ENCODE measurements at regions of chr5 and their contacts with region 1.

Region 1: GRCh38 chr5:142611154-142611553 is 74.7 kb downstream of the FGF1 start:
- DNase-seq: peak; percentile 76
- H3K4me3 ChIP-seq: no peak overlapping the region
- H3K27ac ChIP-seq: no peak overlapping the region
- H3K4me1 ChIP-seq: peaks cover 2 to 14% of the 10 kb centered on the region in 2 experiments; a peak in 2 of 4 replicates
- H3K27me3 ChIP-seq: no peaks in the 10 kb centered on the region
- CTCF ChIP-seq: peak; percentile 85
- EP300 ChIP-seq: no peak
- RAD21 ChIP-seq: peak; percentile 98

Region 2: DNA sequence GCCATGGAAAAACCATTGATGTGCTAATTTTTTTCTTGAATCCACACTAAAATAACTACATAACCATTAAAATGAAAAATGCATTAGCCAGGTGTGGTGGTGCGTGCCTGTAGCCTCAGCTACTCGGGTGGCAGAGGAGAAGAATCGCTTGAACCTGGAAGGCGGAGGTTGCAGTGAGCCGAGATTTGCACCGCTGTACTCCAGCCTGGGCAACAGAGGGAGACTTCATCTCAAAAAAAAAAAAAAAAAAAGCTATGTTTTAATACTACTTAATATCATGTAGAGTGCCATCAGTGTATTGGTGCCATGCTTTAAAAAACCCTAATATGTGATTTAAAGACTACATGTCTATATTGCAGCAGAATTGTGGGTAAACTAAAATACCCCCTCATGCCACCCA is 443.7 kb before region 1 on chr5:
- CTCF ChIA-PET with region 1: no interaction called
- POLR2A ChIA-PET with region 1: no interaction called
- DNase-seq: no peak
- H3K4me3 ChIP-seq: no peak overlapping the region
- H3K27ac ChIP-seq: peak overlapping the region in 1 of 2 experiments; percentile 99; a peak in 2 of 4 replicates
- H3K4me1 ChIP-seq: peaks cover 5 to 48% of the 10 kb centered on the region in 2 experiments
- H3K27me3 ChIP-seq: no peaks in the 10 kb centered on the region
- CTCF ChIP-seq: peak; percentile 24; the same call in 1 of the 2 replicates
- EP300 ChIP-seq: no peak
- RAD21 ChIP-seq: peak; percentile 48

Region 3: GRCh38 chr5:142520886-142521285 is 90.3 kb before region 1 on chr5:
- CTCF ChIA-PET with region 1: no interaction called
- POLR2A ChIA-PET with region 1: no interaction called
- DNase-seq: no peak
- H3K4me3 ChIP-seq: no peak overlapping the region
- H3K27ac ChIP-seq: no peak overlapping the region
- H3K4me1 ChIP-seq: 0 out of 4 replicates have a peak, but pooled peaks cover 0 to 5% of the 10 kb centered on the region in 2 experiments
- H3K27me3 ChIP-seq: no peaks in the 10 kb centered on the region
- CTCF ChIP-seq: no peak
- EP300 ChIP-seq: no peak
- RAD21 ChIP-seq: no peak

Region 4: GRCh38 chr5:142587354-142587965 is 23.7 kb before region 1 on chr5:
- CTCF ChIA-PET with region 1: interaction called, 14 read pairs
- POLR2A ChIA-PET with region 1: no interaction called
- DNase-seq: no peak
- H3K4me3 ChIP-seq: no peak overlapping the region
- H3K27ac ChIP-seq: no peak overlapping the region
- H3K4me1 ChIP-seq: peaks cover 2 to 6% of the 10 kb centered on the region in 2 experiments; a peak in 2 of 4 replicates
- H3K27me3 ChIP-seq: no peaks in the 10 kb centered on the region
- CTCF ChIP-seq: peak; percentile 61
- EP300 ChIP-seq: no peak
- RAD21 ChIP-seq: peak; percentile 50

Region 5: GRCh38 chr5:142597546-142598341 is 13.4 kb before region 1 on chr5:
- CTCF ChIA-PET with region 1: interaction called, 55 read pairs
- POLR2A ChIA-PET with region 1: no interaction called
- DNase-seq: no peak
- H3K4me3 ChIP-seq: 0 out of 4 replicates have a peak overlapping the region, but pooled peaks of 1 of the 2 experiments have one; percentile 13
- H3K27ac ChIP-seq: peak overlapping the region in 1 of 2 experiments; percentile 82; a peak in 3 of 4 replicates
- H3K4me1 ChIP-seq: peaks cover 6 to 17% of the 10 kb centered on the region in 2 experiments; a peak in 2 of 4 replicates
- H3K27me3 ChIP-seq: no peaks in the 10 kb centered on the region
- CTCF ChIP-seq: peak; percentile 54
- EP300 ChIP-seq: no peak
- RAD21 ChIP-seq: no peak

Region 6: GRCh38 chr5:142627383-142628255 is 16.5 kb after region 1 on chr5:
- CTCF ChIA-PET with region 1: interaction called, 55 read pairs
- POLR2A ChIA-PET with region 1: no interaction called
- DNase-seq: no peak
- H3K4me3 ChIP-seq: no peak overlapping the region
- H3K27ac ChIP-seq: no peak overlapping the region
- H3K4me1 ChIP-seq: peaks cover 21 to 26% of the 10 kb centered on the region in 2 experiments
- H3K27me3 ChIP-seq: no peaks in the 10 kb centered on the region
- CTCF ChIP-seq: no peak
- EP300 ChIP-seq: no peak
- RAD21 ChIP-seq: no peak

Region 7: GRCh38 chr5:142636076-142636475 is 24.9 kb after region 1 on chr5:
- CTCF ChIA-PET with region 1: interaction called, 29 read pairs
- POLR2A ChIA-PET with region 1: no interaction called
- DNase-seq: peak; percentile 69
- H3K4me3 ChIP-seq: no peak overlapping the region
- H3K27ac ChIP-seq: peak overlapping the region in 1 of 2 experiments; percentile 80; a peak in 2 of 4 replicates
- H3K4me1 ChIP-seq: peaks cover 6 to 33% of the 10 kb centered on the region in 2 experiments; a peak in 3 of 4 replicates
- H3K27me3 ChIP-seq: no peaks in the 10 kb centered on the region
- CTCF ChIP-seq: no peak
- EP300 ChIP-seq: peak in 1 of 2 experiments; percentile 61; a peak in 1 of 4 replicates
- RAD21 ChIP-seq: no peak

Region 8: DNA sequence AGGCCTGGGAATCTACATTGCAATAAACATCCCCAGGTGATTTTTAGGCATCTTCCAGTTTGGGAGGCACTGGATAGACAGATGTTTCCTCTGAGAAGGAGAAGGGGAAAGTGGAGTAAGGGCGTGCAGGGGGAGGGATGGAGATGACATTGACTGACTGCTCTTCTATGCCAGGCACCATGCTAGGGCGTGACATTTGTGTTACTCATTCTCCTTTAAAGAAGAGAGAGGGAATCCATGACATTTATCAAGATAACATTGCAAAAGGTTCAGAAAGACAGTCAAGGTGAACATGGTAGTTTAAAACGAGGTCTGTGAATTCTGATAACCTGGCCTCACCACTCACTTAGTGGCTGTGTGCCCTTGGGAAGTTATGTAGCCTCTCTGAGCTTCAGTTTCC is 38.9 kb after region 1 on chr5:
- CTCF ChIA-PET with region 1: interaction called, 77 read pairs
- POLR2A ChIA-PET with region 1: no interaction called
- DNase-seq: no peak
- H3K4me3 ChIP-seq: no peak overlapping the region
- H3K27ac ChIP-seq: no peak overlapping the region
- H3K4me1 ChIP-seq: peaks cover 0 to 3% of the 10 kb centered on the region in 2 experiments; a peak in 1 of 4 replicates
- H3K27me3 ChIP-seq: no peaks in the 10 kb centered on the region
- CTCF ChIP-seq: no peak
- EP300 ChIP-seq: no peak
- RAD21 ChIP-seq: no peak

Region 9: GRCh38 chr5:142685418-142686209 is 74.5 kb after region 1 on chr5 and contains the start of gene FGF1:
- CTCF ChIA-PET with region 1: interaction called, 13 read pairs
- POLR2A ChIA-PET with region 1: no interaction called
- DNase-seq: peak; percentile 76
- H3K4me3 ChIP-seq: no peak within 1 kb of the TSS
- H3K27ac ChIP-seq: peak within 1 kb of the TSS in 1 of 2 experiments; percentile 95; a peak in 2 of 4 replicates
- H3K4me1 ChIP-seq: peaks cover 15 to 52% of the 10 kb centered on the region in 2 experiments; a peak in 3 of 4 replicates
- H3K27me3 ChIP-seq: no peaks in the 10 kb centered on the region
- CTCF ChIP-seq: no peak
- EP300 ChIP-seq: no peak
- RAD21 ChIP-seq: no peak
- polyA plus RNA-seq, gene FGF1: 5.3 and 5.9 TPM in 2 replicates